ENCODE measurements at regions of chr10 and their contacts with region 1.

Region 1: DNA sequence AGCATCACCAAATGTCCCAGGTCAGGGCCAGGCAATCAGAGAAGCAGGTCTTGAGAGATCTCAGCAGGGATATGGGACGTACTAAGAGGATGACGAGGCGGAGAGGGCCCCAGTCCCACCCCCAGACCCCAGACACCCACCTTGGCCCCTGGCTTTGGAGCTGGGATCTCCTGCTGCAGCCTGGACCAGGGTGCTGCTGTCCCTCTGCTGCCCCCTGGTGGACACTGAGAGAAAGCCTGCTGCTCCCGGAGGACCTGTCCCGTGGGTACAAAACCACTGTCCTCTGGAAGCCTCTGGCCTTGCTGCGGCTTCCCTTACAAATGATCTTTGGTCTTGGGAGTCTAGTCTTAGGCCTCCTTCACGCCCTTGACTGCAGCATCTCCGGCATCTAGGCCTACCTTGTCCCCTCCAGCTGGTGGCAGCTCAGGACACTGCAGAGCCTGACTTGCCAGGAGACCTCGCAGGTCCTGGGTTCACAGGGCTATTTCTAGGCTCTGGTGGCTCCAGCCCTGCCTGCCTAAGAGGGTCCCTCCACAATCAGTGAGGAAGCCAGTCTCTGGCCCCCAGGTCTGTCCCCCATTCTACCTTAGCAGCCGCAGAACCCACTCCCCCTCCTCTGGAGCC is 97.1 kb downstream of the RGS10 start:
- DNase-seq: peak; percentile 64
- ATAC-seq: peak; percentile 89
- H3K4me3 ChIP-seq: no peak overlapping the region
- H3K27ac ChIP-seq: no peak overlapping the region
- H3K4me1 ChIP-seq: peaks cover 7% of the 10 kb centered on the region
- H3K27me3 ChIP-seq: no peaks in the 10 kb centered on the region
- CTCF ChIP-seq: peak; percentile 99

Region 2: GRCh38 chr10:119489991-119490326 is 44.5 kb after region 1 on chr10:
- CTCF ChIA-PET with region 1: interaction called, 15 read pairs
- POLR2A ChIA-PET with region 1: no interaction called
- in situ Hi-C with region 1: no loop called
- intact Hi-C with region 1: no loop called
- DNase-seq: no peak
- ATAC-seq: peak; percentile 41
- H3K4me3 ChIP-seq: peak overlapping the region; percentile 38 to 57
- H3K27ac ChIP-seq: no peak overlapping the region
- H3K4me1 ChIP-seq: peaks cover 14% of the 10 kb centered on the region
- H3K27me3 ChIP-seq: no peaks in the 10 kb centered on the region
- CTCF ChIP-seq: no peak; the same call in 1 of the 2 replicates

Region 3: DNA sequence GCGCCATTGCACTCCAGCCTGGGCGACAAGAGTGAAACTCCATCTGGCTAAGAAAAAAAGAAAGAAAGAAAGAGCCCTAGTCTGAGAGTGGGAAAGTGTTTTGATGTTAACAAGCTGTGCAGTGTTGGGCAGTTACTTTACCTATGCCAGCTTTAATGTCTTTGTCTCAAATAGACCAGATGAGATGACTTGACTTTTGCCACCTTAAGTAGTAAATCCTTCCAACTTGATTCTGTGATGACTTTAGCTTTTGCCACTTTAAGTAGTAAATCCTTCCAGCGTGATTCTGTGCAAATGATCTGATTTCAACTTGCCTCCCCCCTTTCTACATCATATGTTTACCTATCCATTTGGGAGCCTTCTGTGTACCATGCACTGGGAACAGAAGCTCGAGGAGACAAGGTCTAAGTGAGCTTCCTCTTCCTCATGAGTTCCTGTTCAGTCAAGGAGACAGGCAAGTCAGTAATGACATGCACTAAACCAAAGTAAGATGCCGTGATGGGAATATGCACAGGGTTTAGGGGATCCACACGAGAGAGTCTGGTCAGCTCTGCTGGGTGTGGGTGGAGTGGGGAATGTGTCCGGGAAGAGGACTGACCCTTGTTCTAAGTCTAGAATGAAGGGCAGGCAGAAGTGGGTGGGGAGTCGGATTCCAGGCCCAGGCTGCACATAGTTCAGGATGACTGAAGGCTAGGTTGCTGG is 297.7 kb after region 1 on chr10:
- CTCF ChIA-PET with region 1: interaction called, 12 read pairs
- POLR2A ChIA-PET with region 1: no interaction called
- in situ Hi-C with region 1: no loop called
- intact Hi-C with region 1: no loop called
- DNase-seq: no peak
- ATAC-seq: peak; percentile 9; the same call in 1 of the 2 replicates
- H3K4me3 ChIP-seq: no peak overlapping the region
- H3K27ac ChIP-seq: no peak overlapping the region
- H3K4me1 ChIP-seq: peaks cover 5% of the 10 kb centered on the region; the same call in 1 of the 2 replicates
- H3K27me3 ChIP-seq: no peaks in the 10 kb centered on the region
- CTCF ChIP-seq: no peak